ENCODE measurements at regions of chr1 and their contacts with region 1.

Region 1: DNA sequence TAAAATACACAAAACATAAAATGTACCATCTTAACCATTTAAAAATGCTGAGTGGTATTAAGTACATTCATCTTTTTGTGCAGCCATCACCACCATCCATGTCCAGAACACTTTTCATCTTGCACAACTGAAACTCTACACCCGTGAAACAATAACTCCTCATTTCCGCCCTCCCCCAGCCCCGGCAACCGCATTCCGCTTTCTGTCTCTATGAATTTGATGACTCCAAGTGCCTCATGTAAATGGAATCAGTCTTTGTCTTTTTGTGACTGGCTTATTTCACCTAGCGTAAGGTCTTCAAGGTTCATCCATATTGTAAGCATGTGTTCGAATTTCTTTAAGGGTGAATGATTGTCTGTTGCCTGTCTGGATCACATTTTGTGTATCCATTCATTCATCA is 37.2 kb downstream of the SCCPDH start:
- DNase-seq: no peak
- H3K4me3 ChIP-seq: no peak overlapping the region
- H3K27ac ChIP-seq: no peak overlapping the region
- H3K4me1 ChIP-seq: peaks cover 6% of the 10 kb centered on the region
- H3K27me3 ChIP-seq: no peaks in the 10 kb centered on the region
- CTCF ChIP-seq: no peak

Region 2: GRCh38 chr1:246797597-246797996 is 36.2 kb after region 1 on chr1:
- CTCF ChIA-PET with region 1: no interaction called
- POLR2A ChIA-PET with region 1: interaction called, 15 read pairs
- intact Hi-C with region 1: no loop called
- DNase-seq: no peak
- H3K4me3 ChIP-seq: no peak overlapping the region
- H3K27ac ChIP-seq: no peak overlapping the region
- H3K4me1 ChIP-seq: no peaks in the 10 kb centered on the region
- H3K27me3 ChIP-seq: no peaks in the 10 kb centered on the region
- CTCF ChIP-seq: no peak

Measured in A673 (cell line).